ENCODE measurements at regions of chr7 and their contacts with region 1.

Region 1: DNA sequence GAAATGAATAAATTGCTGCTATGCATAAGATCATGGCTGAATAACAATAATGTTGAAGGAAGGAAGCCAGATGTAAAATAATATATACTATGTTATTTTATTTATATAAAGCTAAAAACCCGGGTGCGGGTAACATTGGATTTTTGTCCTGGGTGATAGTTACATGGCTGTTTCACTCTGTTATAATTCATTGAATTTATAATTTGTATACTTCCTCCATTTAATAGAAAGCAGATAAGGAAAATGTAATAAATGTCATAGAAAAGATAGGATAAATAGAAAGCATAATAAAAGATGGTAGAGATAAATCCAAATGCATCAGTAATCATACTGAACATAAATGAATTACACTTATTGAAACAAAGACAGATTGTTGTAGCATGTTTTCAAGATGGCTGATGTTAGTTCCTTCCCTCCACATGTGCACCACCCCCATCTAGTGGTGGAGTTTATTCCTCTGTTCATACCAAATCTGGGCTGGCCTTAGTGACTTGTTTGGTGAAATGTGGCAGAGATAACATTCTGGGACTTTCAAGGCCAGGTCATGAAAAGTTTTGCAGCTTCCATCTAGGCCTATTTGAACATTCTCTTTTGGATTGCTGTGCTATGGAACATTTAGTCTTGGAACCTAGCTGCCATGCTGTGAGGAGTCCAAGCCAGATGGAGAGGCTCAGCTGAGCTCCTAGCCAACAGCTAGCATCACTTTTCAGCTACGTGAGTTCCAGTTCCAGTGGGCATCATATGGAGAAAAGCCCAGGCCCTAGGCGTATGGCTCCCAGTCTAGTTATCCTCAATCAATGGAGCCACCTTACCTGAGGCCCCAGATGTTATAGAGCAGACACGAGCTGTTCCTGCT is 46.9 kb downstream of the AHCYL2 start:
- DNase-seq: peak; percentile 31 to 88 (median 50)
- ATAC-seq: peak; percentile 100
- H3K4me3 ChIP-seq: no peak overlapping the region
- H3K4me3 Mint-ChIP-seq: no peak overlapping the region
- H3K27ac ChIP-seq: no peak overlapping the region
- H3K27ac Mint-ChIP-seq: no peak overlapping the region
- H3K4me1 ChIP-seq: peaks cover 2% of the 10 kb centered on the region
- H3K4me1 Mint-ChIP-seq: peaks cover 6% of the 10 kb centered on the region
- H3K27me3 ChIP-seq: no peaks in the 10 kb centered on the region
- H3K27me3 Mint-ChIP-seq: no peaks in the 10 kb centered on the region
- CTCF ChIP-seq: peak; percentile 83

Region 2: GRCh38 chr7:129163875-129164544 is 107.7 kb before region 1 on chr7:
- CTCF ChIA-PET with region 1: no interaction called
- POLR2A ChIA-PET with region 1: no interaction called
- intact Hi-C with region 1: loop called (anchors 2 to 5 kb)
- DNase-seq: peak in 4 of 14 experiments; percentile 21 to 70 (median 54)
- ATAC-seq: peak; percentile 65
- H3K4me3 ChIP-seq: no peak overlapping the region
- H3K4me3 Mint-ChIP-seq: no peak overlapping the region
- H3K27ac ChIP-seq: no peak overlapping the region
- H3K27ac Mint-ChIP-seq: no peak overlapping the region
- H3K4me1 ChIP-seq: peaks cover 4% of the 10 kb centered on the region
- H3K4me1 Mint-ChIP-seq: peaks cover 6% of the 10 kb centered on the region
- H3K27me3 ChIP-seq: no peaks in the 10 kb centered on the region
- H3K27me3 Mint-ChIP-seq: peaks cover 7% of the 10 kb centered on the region
- CTCF ChIP-seq: peak; percentile 88